Caco-2 (cell line): ENCODE measurements at regions of chr10 and their contacts with region 1.

Region 1: GRCh38 chr10:80382989-80383388 is 25.4 kb upstream of the PRXL2A start:
- DNase-seq: peak; percentile 43 to 52
- H3K4me3 ChIP-seq: no peak overlapping the region
- H3K4me3 Mint-ChIP-seq: no peak overlapping the region
- H3K27ac Mint-ChIP-seq: no peak overlapping the region
- H3K4me1 ChIP-seq: no peaks in the 10 kb centered on the region
- H3K4me1 Mint-ChIP-seq: peaks cover 5% of the 10 kb centered on the region
- H3K27me3 ChIP-seq: no peaks in the 10 kb centered on the region
- H3K27me3 Mint-ChIP-seq: peaks cover 3% of the 10 kb centered on the region
- CTCF ChIP-seq: peak; percentile 50 to 61

Region 2: GRCh38 chr10:79984851-79985250 is 398.1 kb before region 1 on chr10:
- CTCF ChIA-PET with region 1: no interaction called
- POLR2A ChIA-PET with region 1: no interaction called
- intact Hi-C with region 1: no loop called
- DNase-seq: peak in 1 of 2 experiments; percentile 23
- H3K4me3 ChIP-seq: no peak overlapping the region
- H3K4me3 Mint-ChIP-seq: no peak overlapping the region
- H3K27ac Mint-ChIP-seq: no peak overlapping the region
- H3K4me1 ChIP-seq: peaks cover 5% of the 10 kb centered on the region; the same call in 1 of the 2 replicates
- H3K4me1 Mint-ChIP-seq: peaks cover 8% of the 10 kb centered on the region
- H3K27me3 ChIP-seq: no peaks in the 10 kb centered on the region
- H3K27me3 Mint-ChIP-seq: peaks cover 9% of the 10 kb centered on the region
- CTCF ChIP-seq: no peak

Region 3: DNA sequence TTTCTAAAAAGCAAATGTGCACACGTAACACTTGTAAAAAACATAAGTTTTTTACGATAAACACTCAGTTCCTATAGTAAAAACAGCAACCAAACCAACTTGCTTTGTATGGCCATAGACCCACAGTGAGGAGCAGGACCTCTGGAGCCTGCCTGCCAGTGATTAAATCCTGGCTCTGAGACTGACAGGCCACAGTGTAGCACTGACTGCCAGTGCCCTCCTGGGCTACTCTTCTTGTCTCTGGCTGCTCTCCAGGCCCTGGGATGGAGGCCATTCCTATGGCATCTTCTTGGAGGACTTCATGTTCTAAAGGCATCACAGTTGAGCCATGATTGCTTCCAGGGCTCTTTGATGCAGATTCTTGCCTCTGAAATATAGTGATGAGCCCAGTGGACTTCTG is 327.2 kb before region 1 on chr10:
- CTCF ChIA-PET with region 1: no interaction called
- POLR2A ChIA-PET with region 1: no interaction called
- intact Hi-C with region 1: no loop called
- DNase-seq: no peak
- H3K4me3 ChIP-seq: no peak overlapping the region
- H3K4me3 Mint-ChIP-seq: no peak overlapping the region
- H3K27ac Mint-ChIP-seq: no peak overlapping the region
- H3K4me1 ChIP-seq: no peaks in the 10 kb centered on the region; the same call in 1 of the 2 replicates
- H3K4me1 Mint-ChIP-seq: no peaks in the 10 kb centered on the region
- H3K27me3 ChIP-seq: no peaks in the 10 kb centered on the region
- H3K27me3 Mint-ChIP-seq: no peaks in the 10 kb centered on the region
- CTCF ChIP-seq: no peak

Region 4: GRCh38 chr10:80260295-80261243 is 122.4 kb before region 1 on chr10:
- CTCF ChIA-PET with region 1: no interaction called
- POLR2A ChIA-PET with region 1: no interaction called
- intact Hi-C with region 1: loop called (anchors 2 kb)
- DNase-seq: peak in 1 of 2 experiments; percentile 68
- H3K4me3 ChIP-seq: no peak overlapping the region
- H3K4me3 Mint-ChIP-seq: no peak overlapping the region
- H3K27ac Mint-ChIP-seq: no peak overlapping the region
- H3K4me1 ChIP-seq: peaks cover 10% of the 10 kb centered on the region; the same call in 1 of the 2 replicates
- H3K4me1 Mint-ChIP-seq: peaks cover 4% of the 10 kb centered on the region
- H3K27me3 ChIP-seq: no peaks in the 10 kb centered on the region
- H3K27me3 Mint-ChIP-seq: no peaks in the 10 kb centered on the region
- CTCF ChIP-seq: peak; percentile 67 to 85

Region 5: GRCh38 chr10:80397014-80397413 is 14.0 kb after region 1 on chr10:
- CTCF ChIA-PET with region 1: no interaction called
- POLR2A ChIA-PET with region 1: no interaction called
- intact Hi-C with region 1: no loop called
- DNase-seq: no peak
- H3K4me3 ChIP-seq: no peak overlapping the region
- H3K4me3 Mint-ChIP-seq: no peak overlapping the region
- H3K27ac Mint-ChIP-seq: no peak overlapping the region
- H3K4me1 ChIP-seq: no peaks in the 10 kb centered on the region
- H3K4me1 Mint-ChIP-seq: no peaks in the 10 kb centered on the region
- H3K27me3 ChIP-seq: no peaks in the 10 kb centered on the region
- H3K27me3 Mint-ChIP-seq: no peaks in the 10 kb centered on the region
- CTCF ChIP-seq: no peak

Region 6: DNA sequence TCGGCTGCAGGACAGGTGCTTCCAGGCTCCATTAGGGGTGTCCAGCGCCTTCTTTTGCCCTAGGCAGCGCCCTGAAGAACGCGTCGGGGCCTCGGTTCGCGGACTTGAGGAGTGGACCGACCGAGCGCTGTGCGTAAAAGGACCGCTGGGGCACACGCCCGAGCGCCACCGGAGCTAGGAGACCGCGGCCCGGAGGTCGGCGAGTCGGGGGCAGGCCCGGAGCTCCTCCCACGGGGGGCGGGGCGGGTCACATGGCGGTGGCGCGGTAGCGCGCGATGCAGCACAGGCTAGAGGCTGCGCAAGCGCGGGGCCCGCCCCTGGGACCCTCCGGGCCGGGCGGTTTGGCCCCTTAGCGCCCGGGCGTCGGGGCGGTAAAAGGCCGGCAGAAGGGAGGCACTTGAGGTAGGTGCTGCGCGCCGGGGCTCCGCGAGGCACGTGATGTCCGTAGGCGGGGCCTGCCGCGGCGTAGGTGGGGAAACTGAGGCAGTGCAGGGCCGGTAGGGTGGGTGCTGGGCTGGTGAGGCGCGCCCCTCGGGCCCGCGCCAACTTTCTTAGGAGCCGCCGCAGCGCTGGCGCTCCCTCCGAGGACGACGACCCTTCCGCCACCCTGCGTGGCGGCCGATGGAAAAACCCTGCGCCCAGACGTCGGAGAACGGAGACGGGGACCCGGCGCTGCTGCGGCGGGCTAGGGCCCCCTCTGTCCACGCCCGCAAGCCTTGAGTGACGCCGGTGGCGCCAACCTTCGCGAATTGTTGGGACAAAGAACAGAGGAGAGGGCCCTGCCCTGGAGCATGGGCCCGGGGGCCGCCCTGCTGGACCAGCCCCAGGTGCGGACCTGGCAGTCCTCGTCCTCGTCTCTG is 25.5 kb after region 1 on chr10 and contains the start of gene PRXL2A:
- CTCF ChIA-PET with region 1: interaction called, 11 read pairs
- POLR2A ChIA-PET with region 1: no interaction called
- intact Hi-C with region 1: no loop called
- DNase-seq: peak; percentile 92 to 96
- H3K4me3 ChIP-seq: peak within 1 kb of the TSS; percentile 92
- H3K4me3 Mint-ChIP-seq: peak within 1 kb of the TSS; percentile 95
- H3K27ac Mint-ChIP-seq: peak within 1 kb of the TSS; percentile 93
- H3K4me1 ChIP-seq: peaks cover 19% of the 10 kb centered on the region; the same call in 1 of the 2 replicates
- H3K4me1 Mint-ChIP-seq: peaks cover 25% of the 10 kb centered on the region
- H3K27me3 ChIP-seq: no peaks in the 10 kb centered on the region
- H3K27me3 Mint-ChIP-seq: no peaks in the 10 kb centered on the region
- CTCF ChIP-seq: peak in 1 of 2 experiments; percentile 0
- total RNA-seq, gene PRXL2A: 82.0 and 88.6 TPM in 2 replicates

Region 7: GRCh38 chr10:80457554-80458265 is 74.7 kb after region 1 on chr10:
- CTCF ChIA-PET with region 1: no interaction called
- POLR2A ChIA-PET with region 1: no interaction called
- intact Hi-C with region 1: no loop called
- DNase-seq: peak in 1 of 2 experiments; percentile 32
- H3K4me3 ChIP-seq: no peak overlapping the region
- H3K4me3 Mint-ChIP-seq: no peak overlapping the region
- H3K27ac Mint-ChIP-seq: peak overlapping the region; percentile 54
- H3K4me1 ChIP-seq: peaks cover 65% of the 10 kb centered on the region
- H3K4me1 Mint-ChIP-seq: peaks cover 44% of the 10 kb centered on the region
- H3K27me3 ChIP-seq: no peaks in the 10 kb centered on the region
- H3K27me3 Mint-ChIP-seq: no peaks in the 10 kb centered on the region
- CTCF ChIP-seq: peak in 1 of 2 experiments; percentile 28

Region 8: DNA sequence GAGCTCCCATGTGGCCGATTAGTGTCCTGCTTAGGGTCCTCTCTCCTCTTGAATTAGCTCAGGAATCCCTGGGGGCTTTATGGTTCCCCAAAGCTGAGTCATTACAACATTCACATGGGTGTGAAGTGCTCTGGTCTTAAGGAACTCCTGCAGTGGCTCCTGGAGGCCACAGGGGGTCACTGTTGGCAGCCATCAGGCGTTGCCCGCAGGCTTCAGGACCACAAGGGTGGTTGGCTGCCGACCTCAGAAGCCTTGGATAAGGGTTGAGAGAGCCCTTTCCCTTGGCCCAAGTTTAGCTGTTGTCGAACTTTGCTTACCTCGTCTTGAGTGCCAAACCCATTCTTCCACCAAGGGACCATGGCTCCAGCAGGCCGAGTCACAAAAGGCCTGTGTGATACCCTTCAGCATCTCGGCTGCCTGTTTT is 216.4 kb after region 1 on chr10:
- CTCF ChIA-PET with region 1: interaction called, 3 read pairs
- POLR2A ChIA-PET with region 1: no interaction called
- intact Hi-C with region 1: loop called (anchors 10 kb)
- DNase-seq: peak; percentile 44 to 45
- H3K4me3 ChIP-seq: no peak overlapping the region
- H3K4me3 Mint-ChIP-seq: no peak overlapping the region
- H3K27ac Mint-ChIP-seq: no peak overlapping the region
- H3K4me1 ChIP-seq: no peaks in the 10 kb centered on the region
- H3K4me1 Mint-ChIP-seq: no peaks in the 10 kb centered on the region
- H3K27me3 ChIP-seq: no peaks in the 10 kb centered on the region
- H3K27me3 Mint-ChIP-seq: no peaks in the 10 kb centered on the region
- CTCF ChIP-seq: peak; percentile 68 to 70

Region 9: DNA sequence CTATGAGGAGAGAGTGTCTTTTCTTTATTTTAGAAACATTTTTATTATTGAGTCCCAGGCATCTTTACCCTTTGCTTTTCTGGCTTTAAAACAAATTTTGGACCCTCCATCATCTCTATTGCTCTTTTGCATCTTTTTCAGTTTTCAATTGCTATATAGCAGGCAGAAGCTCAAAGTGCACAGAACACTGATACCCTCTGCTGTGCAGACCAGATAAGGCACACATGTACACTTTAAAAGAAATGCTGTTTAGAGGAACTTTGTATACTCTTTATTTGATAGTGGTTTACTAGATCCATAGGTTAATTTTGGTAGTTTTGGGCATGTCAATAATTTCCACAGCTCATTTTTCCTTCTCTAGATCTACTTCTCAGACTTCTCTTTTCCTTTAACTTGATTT is 478.9 kb after region 1 on chr10:
- CTCF ChIA-PET with region 1: no interaction called
- POLR2A ChIA-PET with region 1: no interaction called
- intact Hi-C with region 1: loop called (anchors 5 kb)
- DNase-seq: no peak
- H3K4me3 ChIP-seq: no peak overlapping the region
- H3K4me3 Mint-ChIP-seq: no peak overlapping the region
- H3K27ac Mint-ChIP-seq: no peak overlapping the region
- H3K4me1 ChIP-seq: no peaks in the 10 kb centered on the region
- H3K4me1 Mint-ChIP-seq: no peaks in the 10 kb centered on the region
- H3K27me3 ChIP-seq: no peaks in the 10 kb centered on the region
- H3K27me3 Mint-ChIP-seq: peaks cover 7% of the 10 kb centered on the region
- CTCF ChIP-seq: peak; percentile 23 to 51